H1 (cell line): ENCODE measurements at regions of chr14 and their contacts with region 1.

Region 1: GRCh38 chr14:38808734-38809462 is 294.1 kb downstream of the SEC23A start:
- DNase-seq: peak in 1 of 2 experiments; percentile 60
- H3K4me3 ChIP-seq: no peak overlapping the region
- H3K27ac ChIP-seq: no peak overlapping the region
- H3K4me1 ChIP-seq: no peaks in the 10 kb centered on the region; a peak in 1 of 7 replicates
- H3K27me3 ChIP-seq: no peaks in the 10 kb centered on the region
- CTCF ChIP-seq: peak in 2 of 3 experiments; percentile 14 to 43; a peak in 2 of 4 replicates
- EP300 ChIP-seq: no peak
- POLR2A ChIP-seq: no peak
- RAD21 ChIP-seq: no peak

Region 2: GRCh38 chr14:38794674-38795073 is 14.2 kb before region 1 on chr14:
- CTCF ChIA-PET with region 1: interaction called, 18 read pairs
- POLR2A ChIA-PET with region 1: no interaction called
- DNase-seq: no peak
- H3K4me3 ChIP-seq: no peak overlapping the region
- H3K27ac ChIP-seq: no peak overlapping the region
- H3K4me1 ChIP-seq: peaks cover 2 to 7% (median 5%) of the 10 kb centered on the region in 4 experiments
- H3K27me3 ChIP-seq: no peaks in the 10 kb centered on the region
- CTCF ChIP-seq: no peak
- EP300 ChIP-seq: no peak
- POLR2A ChIP-seq: no peak
- RAD21 ChIP-seq: no peak